Ovary (tissue), 10 donors: ENCODE measurements at regions of chr12 and their contacts with region 1.

Region 1: GRCh38 chr12:129067491-129067890 is 214.2 kb downstream of the GLT1D1 start:
- DNase-seq: no peak
- H3K4me3 ChIP-seq: no peak overlapping the region
- H3K27ac ChIP-seq: no peak overlapping the region
- H3K4me1 ChIP-seq: no peaks in the 10 kb centered on the region
- H3K27me3 ChIP-seq: no peaks in the 10 kb centered on the region
- CTCF ChIP-seq: no peak
- EP300 ChIP-seq: no peak
- POLR2A ChIP-seq: no peak

Region 2: GRCh38 chr12:130606231-130606630 is 1538.7 kb after region 1 on chr12:
- intact Hi-C with region 1: loop called in 1 of 4 experiments (anchors 10 kb)
- DNase-seq: no peak
- H3K4me3 ChIP-seq: no peak overlapping the region
- H3K27ac ChIP-seq: no peak overlapping the region
- H3K4me1 ChIP-seq: no peaks in the 10 kb centered on the region
- H3K27me3 ChIP-seq: no peaks in the 10 kb centered on the region
- CTCF ChIP-seq: no peak
- EP300 ChIP-seq: no peak
- POLR2A ChIP-seq: no peak